ENCODE measurements at regions of chr6 and their contacts with region 1.

Region 1: GRCh38 chr6:37169496-37170272 is at the start of gene PIM1:
- DNase-seq: peak; percentile 99
- H3K4me3 ChIP-seq: peak within 1 kb of the TSS; percentile 89 to 93
- H3K27ac ChIP-seq: peak within 1 kb of the TSS; percentile 88 to 95
- H3K4me1 ChIP-seq: peaks cover 4 to 19% of the 10 kb centered on the region in 2 experiments; a peak in 3 of 4 replicates
- H3K27me3 ChIP-seq: no peaks in the 10 kb centered on the region
- CTCF ChIP-seq: no peak
- EP300 ChIP-seq: peak in 1 of 2 experiments; percentile 31; a peak in 1 of 4 replicates
- RAD21 ChIP-seq: no peak
- polyA plus RNA-seq, gene PIM1: 33.9 and 35.3 TPM in 2 replicates

Region 2: GRCh38 chr6:36765594-36766398 is 403.9 kb before region 1 on chr6:
- CTCF ChIA-PET with region 1: interaction called, 18 read pairs
- POLR2A ChIA-PET with region 1: no interaction called
- DNase-seq: peak; percentile 90
- H3K4me3 ChIP-seq: peak overlapping the region in 1 of 2 experiments; percentile 46; a peak in 1 of 4 replicates
- H3K27ac ChIP-seq: no peak overlapping the region
- H3K4me1 ChIP-seq: peaks cover 13 to 14% of the 10 kb centered on the region in 2 experiments; a peak in 3 of 4 replicates
- H3K27me3 ChIP-seq: no peaks in the 10 kb centered on the region
- CTCF ChIP-seq: peak; percentile 87
- EP300 ChIP-seq: no peak
- RAD21 ChIP-seq: peak; percentile 98

Region 3: GRCh38 chr6:37038292-37039198 is 131.1 kb before region 1 on chr6:
- CTCF ChIA-PET with region 1: interaction called, 22 read pairs
- POLR2A ChIA-PET with region 1: no interaction called
- DNase-seq: peak; percentile 65
- H3K4me3 ChIP-seq: no peak overlapping the region
- H3K27ac ChIP-seq: peak overlapping the region; percentile 21 to 71; a peak in 3 of 4 replicates
- H3K4me1 ChIP-seq: peaks cover 0 to 12% of the 10 kb centered on the region in 2 experiments; a peak in 2 of 4 replicates
- H3K27me3 ChIP-seq: no peaks in the 10 kb centered on the region
- CTCF ChIP-seq: no peak
- EP300 ChIP-seq: no peak
- RAD21 ChIP-seq: no peak

Region 4: DNA sequence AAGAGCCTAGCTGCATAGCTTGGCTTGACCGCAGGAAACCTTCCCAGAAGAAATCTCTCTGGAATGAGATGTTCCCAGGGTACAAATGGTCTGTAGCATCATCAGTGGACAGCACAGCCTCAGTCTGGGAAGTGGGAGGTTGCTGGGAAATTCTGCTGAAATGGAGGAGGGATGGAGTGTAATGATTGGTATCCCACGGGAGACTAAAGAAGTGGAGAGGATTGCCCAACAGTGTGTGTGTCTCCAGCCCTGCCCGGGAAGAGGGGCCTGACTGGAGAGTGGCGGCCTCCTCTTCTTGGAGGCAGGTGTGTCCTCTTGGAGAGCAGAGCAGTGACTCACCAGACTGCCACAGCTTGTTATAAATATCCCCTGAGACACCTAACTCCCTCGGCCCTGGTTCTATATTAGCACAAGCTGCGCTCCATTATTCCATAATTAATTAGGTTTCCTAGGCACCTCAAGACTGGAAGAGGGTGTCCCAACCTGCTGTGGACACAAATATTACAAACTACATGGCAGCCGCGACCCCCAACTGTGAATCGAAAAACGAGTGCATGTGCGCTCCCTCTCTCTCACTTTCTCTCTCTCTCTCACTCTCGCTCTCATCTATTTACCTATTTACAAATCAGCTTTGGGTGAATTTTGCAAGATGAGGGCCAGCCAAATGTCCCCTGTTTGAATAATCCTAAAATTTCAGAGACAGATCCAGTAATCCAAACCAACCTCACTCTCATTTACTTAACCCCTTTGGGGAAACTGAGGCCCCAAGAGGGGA is 95.4 kb before region 1 on chr6:
- CTCF ChIA-PET with region 1: interaction called, 10 read pairs
- POLR2A ChIA-PET with region 1: no interaction called
- DNase-seq: no peak
- H3K4me3 ChIP-seq: no peak overlapping the region
- H3K27ac ChIP-seq: no peak overlapping the region; a peak in 1 of 4 replicates
- H3K4me1 ChIP-seq: peaks cover 0 to 23% of the 10 kb centered on the region in 2 experiments; a peak in 3 of 4 replicates
- H3K27me3 ChIP-seq: no peaks in the 10 kb centered on the region
- CTCF ChIP-seq: no peak
- EP300 ChIP-seq: no peak
- RAD21 ChIP-seq: no peak

Region 5: DNA sequence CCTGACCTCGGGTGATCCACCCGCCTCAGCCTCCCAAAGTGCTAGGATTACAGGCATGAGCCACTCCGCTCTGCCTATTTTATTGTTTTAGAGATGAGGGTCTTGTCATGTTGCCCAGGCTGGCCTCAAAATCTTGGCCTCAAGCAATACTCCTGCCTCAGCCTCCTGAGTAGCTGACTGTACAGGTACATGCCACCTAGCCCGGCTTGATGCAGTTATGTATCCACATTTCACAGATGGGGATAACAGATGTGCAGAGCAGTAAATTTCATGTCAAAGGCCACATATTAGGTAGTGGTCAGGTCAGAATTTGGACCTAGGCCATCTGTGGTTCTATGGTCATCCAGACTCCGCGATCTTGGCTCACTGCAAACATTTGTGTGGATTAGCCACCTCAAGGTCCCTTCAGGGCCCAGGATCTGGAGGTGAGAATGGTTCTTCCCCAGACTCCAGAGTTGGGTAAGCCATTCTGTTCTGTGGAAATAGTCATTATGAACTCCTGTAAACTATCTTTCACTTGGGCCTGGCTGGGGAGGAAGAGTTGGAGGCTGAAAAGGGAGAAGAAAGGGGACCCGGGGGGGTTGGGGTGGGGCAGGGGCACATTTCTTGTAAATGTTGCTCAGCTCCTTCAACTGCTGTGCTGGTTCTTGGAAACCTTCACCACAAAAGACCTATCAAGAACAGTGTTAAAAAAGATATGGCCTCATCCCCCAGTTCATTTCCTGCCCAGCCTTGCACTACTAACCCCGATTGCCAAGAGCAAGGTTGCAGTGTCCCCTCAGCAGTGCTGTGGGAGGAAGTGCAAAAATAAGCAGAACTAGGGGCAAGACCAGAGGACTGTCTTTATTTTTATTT is 13.3 kb after region 1 on chr6:
- CTCF ChIA-PET with region 1: interaction called, 26 read pairs
- POLR2A ChIA-PET with region 1: no interaction called
- DNase-seq: no peak
- H3K4me3 ChIP-seq: no peak overlapping the region
- H3K27ac ChIP-seq: no peak overlapping the region
- H3K4me1 ChIP-seq: no peaks in the 10 kb centered on the region
- H3K27me3 ChIP-seq: no peaks in the 10 kb centered on the region
- CTCF ChIP-seq: no peak
- EP300 ChIP-seq: no peak
- RAD21 ChIP-seq: no peak

Region 6: GRCh38 chr6:37207903-37208456 is 38.3 kb after region 1 on chr6:
- CTCF ChIA-PET with region 1: interaction called, 68 read pairs
- POLR2A ChIA-PET with region 1: no interaction called
- DNase-seq: peak; percentile 61
- H3K4me3 ChIP-seq: no peak overlapping the region
- H3K27ac ChIP-seq: no peak overlapping the region
- H3K4me1 ChIP-seq: peaks cover 0 to 2% of the 10 kb centered on the region in 2 experiments; a peak in 1 of 4 replicates
- H3K27me3 ChIP-seq: no peaks in the 10 kb centered on the region
- CTCF ChIP-seq: peak; percentile 77
- EP300 ChIP-seq: no peak
- RAD21 ChIP-seq: peak; percentile 58